ENCODE measurements at regions of chr15 and their contacts with region 1.

Region 1: GRCh38 chr15:77013776-77014131 is 18.8 kb downstream of the PSTPIP1 start:
- DNase-seq: peak; percentile 95
- H3K4me3 Mint-ChIP-seq: peak overlapping the region; percentile 73
- H3K27ac Mint-ChIP-seq: peak overlapping the region; percentile 83
- H3K4me1 Mint-ChIP-seq: peaks cover 87% of the 10 kb centered on the region
- H3K27me3 Mint-ChIP-seq: peaks cover 1% of the 10 kb centered on the region

Region 2: DNA sequence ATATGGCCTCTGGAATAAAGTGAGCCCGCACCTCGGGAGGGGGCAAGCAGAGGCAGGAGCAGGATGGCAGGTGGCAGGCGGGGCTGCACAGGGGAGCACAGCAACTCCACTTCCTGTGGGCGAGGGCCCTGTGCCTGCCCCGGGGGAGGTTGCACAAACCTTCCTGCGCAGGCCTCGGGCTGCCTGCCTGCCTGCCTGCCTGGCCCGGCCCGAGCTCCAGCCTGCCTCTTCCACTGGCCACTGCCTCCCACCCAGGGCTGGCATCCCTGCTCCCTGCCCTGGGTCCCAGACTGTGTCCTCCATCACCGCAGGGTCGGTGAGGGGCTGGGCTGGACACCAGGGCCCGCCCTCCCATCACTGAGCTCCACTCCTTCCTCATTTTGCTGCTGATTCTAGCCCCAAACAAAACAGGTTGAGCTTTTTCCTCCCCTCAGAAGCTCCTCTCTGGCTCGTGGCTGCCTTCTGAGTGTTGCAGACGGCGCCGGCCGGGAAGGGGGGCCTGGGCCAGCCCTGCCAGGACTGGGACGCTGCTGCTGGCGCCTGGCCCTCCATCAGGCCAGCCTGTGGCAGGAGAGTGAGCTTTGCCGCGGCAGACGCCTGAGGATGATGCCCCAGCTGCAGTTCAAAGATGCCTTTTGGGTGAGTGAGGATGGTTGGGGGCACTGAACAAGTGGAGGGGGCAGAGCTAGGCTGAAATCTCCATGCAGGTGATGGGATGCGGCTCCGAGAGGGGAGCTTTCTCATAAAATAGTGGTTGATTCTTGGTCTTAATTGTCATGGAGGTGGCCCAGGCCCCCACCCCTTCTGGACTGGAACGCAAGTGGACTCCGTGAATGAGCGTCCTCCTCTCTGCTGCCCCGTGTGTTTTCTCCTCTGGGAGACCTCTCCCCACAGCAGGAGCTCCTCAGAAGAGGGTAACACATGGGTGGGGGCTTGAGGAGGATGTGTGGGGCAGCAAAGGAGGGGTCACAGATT is 18.5 kb before region 1 on chr15 and contains the start of gene PSTPIP1:
- CTCF ChIA-PET with region 1: interaction called, 12 read pairs
- POLR2A ChIA-PET with region 1: interaction called, 26 read pairs
- intact Hi-C with region 1: loop called (anchors 1 kb)
- DNase-seq: peak; percentile 83
- H3K4me3 Mint-ChIP-seq: peak within 1 kb of the TSS; percentile 92
- H3K27ac Mint-ChIP-seq: peak within 1 kb of the TSS; percentile 99
- H3K4me1 Mint-ChIP-seq: peaks cover 60% of the 10 kb centered on the region
- H3K27me3 Mint-ChIP-seq: no peaks in the 10 kb centered on the region
- total RNA-seq, gene PSTPIP1: 155 to 164 TPM

Region 3: GRCh38 chr15:77002954-77003912 is 10.5 kb before region 1 on chr15:
- CTCF ChIA-PET with region 1: interaction called, 12 read pairs
- POLR2A ChIA-PET with region 1: interaction called, 14 read pairs
- intact Hi-C with region 1: loop called (anchors 1 kb)
- DNase-seq: peak; percentile 91
- H3K4me3 Mint-ChIP-seq: peak overlapping the region; percentile 45
- H3K27ac Mint-ChIP-seq: peak overlapping the region; percentile 85
- H3K4me1 Mint-ChIP-seq: peaks cover 91% of the 10 kb centered on the region
- H3K27me3 Mint-ChIP-seq: no peaks in the 10 kb centered on the region

Measured in activated CD4-positive, alpha-beta memory T cell treated with anti-CD3 and anti-CD28 coated beads for 36 hours (primary cell).